ENCODE measurements at regions of chr9 and their contacts with region 1.

Region 1: DNA sequence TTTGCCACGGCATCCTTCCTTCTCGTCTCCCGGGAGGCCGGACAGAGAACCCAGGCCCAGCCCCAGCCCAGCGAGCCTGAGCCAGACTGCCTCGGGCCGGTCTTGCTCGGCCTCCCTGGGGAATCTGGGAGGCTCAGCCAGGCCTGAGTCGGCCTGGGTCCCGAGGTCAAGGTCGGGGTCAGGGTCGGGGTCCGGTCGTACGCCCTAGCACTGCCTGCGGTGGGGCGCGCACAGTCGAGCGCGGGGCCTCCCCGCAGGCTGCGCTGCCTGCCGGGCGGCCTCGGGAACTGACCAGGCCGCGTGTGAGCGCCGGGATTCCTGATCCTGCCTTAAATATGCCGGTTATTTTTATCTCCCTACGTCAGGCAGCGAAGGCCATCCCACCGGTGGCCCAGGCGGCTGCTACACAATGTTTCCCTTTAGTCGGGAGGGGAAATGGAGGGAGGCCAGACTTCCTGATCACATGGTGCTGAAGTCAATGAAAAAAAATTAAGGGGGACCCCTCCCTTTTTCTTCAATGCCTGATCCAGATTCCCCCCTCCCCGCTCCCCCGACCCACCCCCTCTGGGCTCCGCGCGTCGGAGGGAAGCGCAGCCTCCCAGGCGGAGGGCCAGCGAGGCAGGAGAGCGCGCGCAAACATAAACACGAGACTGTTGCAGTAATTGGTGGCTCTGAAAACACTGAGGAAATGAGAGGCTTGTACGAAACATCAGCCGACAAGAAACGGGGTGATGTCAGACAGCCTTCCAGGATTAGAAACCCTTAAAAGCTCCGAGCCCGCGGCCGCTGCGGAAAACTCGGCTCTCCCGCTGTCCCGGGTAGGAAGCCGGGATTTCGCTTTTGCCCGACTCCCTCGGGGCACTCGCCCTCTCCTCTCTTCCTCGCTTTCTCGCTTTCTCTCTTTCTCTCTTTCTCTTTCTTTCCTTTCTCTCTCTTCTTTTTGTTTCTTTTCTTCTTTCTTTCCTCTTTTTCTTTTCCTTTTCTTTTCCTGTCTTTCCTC is 148.2 kb upstream of the KLF4 start:
- DNase-seq: peak; percentile 61
- H3K4me3 ChIP-seq: peak overlapping the region; percentile 36 to 38
- H3K27ac ChIP-seq: peak overlapping the region; percentile 66 to 90
- H3K4me1 ChIP-seq: no peaks in the 10 kb centered on the region
- H3K27me3 ChIP-seq: no peaks in the 10 kb centered on the region
- CTCF ChIP-seq: peak in 2 of 4 experiments; percentile 12 to 22
- POLR2A ChIP-seq: peak; percentile 55

Region 2: GRCh38 chr9:107732781-107733522 is 95.2 kb after region 1 on chr9:
- intact Hi-C with region 1: loop called (anchors 5 kb)
- DNase-seq: peak; percentile 39
- H3K4me3 ChIP-seq: no peak overlapping the region
- H3K27ac ChIP-seq: peak overlapping the region; percentile 44 to 45
- H3K4me1 ChIP-seq: peaks cover 9% of the 10 kb centered on the region
- H3K27me3 ChIP-seq: no peaks in the 10 kb centered on the region
- CTCF ChIP-seq: no peak
- POLR2A ChIP-seq: no peak

Region 3: GRCh38 chr9:107749787-107750444 is 112.2 kb after region 1 on chr9:
- intact Hi-C with region 1: loop called (anchors 5 kb)
- DNase-seq: peak; percentile 85
- H3K4me3 ChIP-seq: no peak overlapping the region
- H3K27ac ChIP-seq: peak overlapping the region; percentile 43 to 68
- H3K4me1 ChIP-seq: no peaks in the 10 kb centered on the region
- H3K27me3 ChIP-seq: no peaks in the 10 kb centered on the region
- CTCF ChIP-seq: no peak
- POLR2A ChIP-seq: no peak

Region 4: GRCh38 chr9:108053555-108054061 is 415.9 kb after region 1 on chr9:
- intact Hi-C with region 1: loop called (anchors 5 kb)
- DNase-seq: peak; percentile 88
- H3K4me3 ChIP-seq: no peak overlapping the region
- H3K27ac ChIP-seq: peak overlapping the region; percentile 2 to 10
- H3K4me1 ChIP-seq: peaks cover 3% of the 10 kb centered on the region
- H3K27me3 ChIP-seq: no peaks in the 10 kb centered on the region
- CTCF ChIP-seq: no peak
- POLR2A ChIP-seq: no peak

Region 5: DNA sequence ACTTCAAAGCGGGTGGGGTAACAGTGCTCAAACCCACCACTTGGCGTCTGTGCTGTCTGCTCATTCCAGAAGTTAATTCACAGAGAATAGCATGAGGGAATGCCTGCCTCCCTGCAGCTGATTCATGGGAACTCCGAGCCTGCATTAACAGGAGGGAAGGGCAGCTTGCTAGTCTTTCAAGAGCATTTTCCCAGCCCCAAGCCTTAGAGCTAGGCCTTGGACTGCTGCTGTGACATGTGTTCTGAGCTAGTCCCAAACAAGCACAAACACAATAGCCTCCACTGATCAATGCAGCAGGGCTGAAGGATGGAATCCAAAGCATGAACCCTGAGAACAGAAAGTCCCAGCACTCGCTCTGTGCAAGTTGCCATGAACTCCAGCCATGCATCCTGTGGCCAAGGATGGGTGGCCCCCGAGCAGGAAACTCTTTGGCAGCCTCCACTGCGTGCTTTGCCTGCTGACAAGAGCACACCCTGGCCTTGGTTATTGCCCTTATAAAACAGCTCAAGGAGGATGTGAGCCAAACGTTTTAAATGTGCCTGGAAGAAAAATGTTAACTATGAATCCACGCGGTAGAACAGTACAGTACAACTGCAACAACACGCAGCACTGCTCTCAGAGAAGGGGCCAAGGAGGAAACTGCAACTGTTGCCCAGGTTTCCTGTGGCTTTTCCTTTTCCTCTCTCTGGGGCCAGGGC is 504.9 kb after region 1 on chr9:
- intact Hi-C with region 1: loop called (anchors 5 kb)
- DNase-seq: peak; percentile 95
- H3K4me3 ChIP-seq: no peak overlapping the region
- H3K27ac ChIP-seq: peak overlapping the region; percentile 54 to 63
- H3K4me1 ChIP-seq: peaks cover 10% of the 10 kb centered on the region
- H3K27me3 ChIP-seq: no peaks in the 10 kb centered on the region
- CTCF ChIP-seq: peak in 2 of 4 experiments; percentile 15 to 28
- POLR2A ChIP-seq: no peak

Measured in prostate gland (tissue), 2 donors.